Endothelial cell of umbilical vein (primary cell): ENCODE measurements at regions of chr19 and their contacts with region 1.

Region 1: DNA sequence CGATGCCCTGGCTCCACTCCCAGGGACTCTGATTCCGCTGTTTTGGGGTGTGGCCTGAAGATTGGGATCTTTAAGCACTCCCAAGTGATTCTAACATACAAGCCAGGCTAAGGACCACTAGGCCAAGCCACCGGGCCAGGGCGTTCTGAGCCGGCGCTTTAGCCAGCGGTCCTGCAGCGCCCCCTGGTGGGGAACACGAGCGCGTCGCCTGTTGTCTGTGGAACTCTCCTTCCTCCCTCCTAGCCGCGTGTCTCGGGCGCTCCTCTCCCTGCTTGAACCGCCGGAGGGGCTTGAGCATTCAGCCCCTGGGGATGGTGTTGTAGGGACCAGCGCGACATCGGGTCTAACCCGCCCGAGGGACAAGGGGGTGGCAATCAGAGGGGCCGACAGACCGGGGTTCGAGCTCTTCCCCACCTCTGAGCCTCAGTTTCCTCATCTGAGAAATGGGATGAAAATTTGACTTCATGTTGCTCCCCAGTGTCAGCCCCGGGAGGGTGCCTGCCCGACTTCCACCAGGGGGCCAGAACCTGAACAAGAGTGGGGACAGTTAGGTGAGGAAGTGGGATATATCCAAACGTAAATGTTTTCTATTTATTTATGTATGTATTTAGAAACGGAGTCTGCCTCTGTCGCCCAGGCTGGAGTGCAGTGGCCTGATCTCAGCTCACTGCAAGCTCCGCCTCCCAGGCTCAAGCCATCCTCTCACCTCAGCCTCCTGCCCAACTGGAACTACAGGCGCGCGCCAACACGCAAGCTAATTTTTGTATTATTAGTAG is 18.0 kb upstream of the PNMA8B start:
- DNase-seq: peak; percentile 55
- H3K4me3 ChIP-seq: no peak overlapping the region
- H3K27ac ChIP-seq: no peak overlapping the region
- H3K4me1 ChIP-seq: no peaks in the 10 kb centered on the region
- H3K27me3 ChIP-seq: no peaks in the 10 kb centered on the region
- CTCF ChIP-seq: peak; percentile 82 to 99
- POLR2A ChIP-seq: no peak

Region 2: DNA sequence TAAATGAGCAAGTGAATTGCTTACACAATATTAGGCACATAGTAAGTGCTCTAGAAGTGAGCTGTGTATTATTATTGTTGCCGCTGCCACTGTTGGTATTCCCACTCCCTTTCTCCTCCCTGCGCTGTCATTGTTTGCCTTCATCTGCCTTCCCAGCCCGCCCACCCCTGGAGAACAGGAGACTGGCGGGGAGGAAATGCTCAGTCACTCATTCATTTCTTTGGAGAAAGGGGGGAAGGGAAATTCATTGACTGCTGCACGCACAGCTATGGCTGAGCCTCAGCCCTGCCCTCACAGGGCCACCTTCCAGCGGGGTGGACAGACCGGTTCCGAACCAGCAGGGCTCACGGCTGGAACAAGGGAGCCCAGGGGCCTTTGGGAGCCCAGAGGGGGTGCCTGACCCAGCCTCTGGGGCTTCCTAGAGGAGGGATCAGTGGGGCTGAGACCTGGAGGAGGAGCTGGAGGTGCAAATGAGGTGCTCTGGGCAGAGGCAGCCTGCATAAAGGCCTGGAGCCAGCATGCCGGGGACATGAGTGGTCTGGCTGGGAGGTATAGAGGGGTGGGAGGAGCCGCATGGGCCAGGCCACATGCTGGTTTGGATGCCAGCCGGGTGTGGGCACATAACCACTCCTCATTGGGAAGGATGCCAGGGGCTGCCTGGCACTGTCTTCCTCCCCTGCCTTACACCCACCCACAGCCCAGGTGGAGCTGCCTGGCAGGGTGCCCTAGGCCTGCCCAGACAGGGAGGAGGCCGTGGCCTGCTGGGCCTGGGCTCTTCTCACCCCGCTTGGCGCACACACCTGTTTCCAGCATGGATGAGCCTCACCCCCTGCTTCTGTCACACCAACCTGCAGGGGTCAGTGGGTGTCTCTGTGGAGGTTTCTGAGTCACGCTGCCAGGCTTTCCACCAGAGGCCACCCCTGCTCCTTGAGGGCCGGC is 140.0 kb before region 1 on chr19:
- CTCF ChIA-PET with region 1: no interaction called
- POLR2A ChIA-PET with region 1: no interaction called
- dilution Hi-C with region 1: no loop called
- intact Hi-C with region 1: no loop called
- DNase-seq: peak; percentile 81
- H3K4me3 ChIP-seq: no peak overlapping the region
- H3K27ac ChIP-seq: peak overlapping the region; percentile 82
- H3K4me1 ChIP-seq: peaks cover 34% of the 10 kb centered on the region
- H3K27me3 ChIP-seq: no peaks in the 10 kb centered on the region
- CTCF ChIP-seq: no peak
- POLR2A ChIP-seq: no peak

Region 3: GRCh38 chr19:46392243-46392801 is 121.3 kb before region 1 on chr19:
- CTCF ChIA-PET with region 1: interaction called, 72 read pairs
- POLR2A ChIA-PET with region 1: no interaction called
- dilution Hi-C with region 1: no loop called
- intact Hi-C with region 1: loop called (anchors 1 kb)
- DNase-seq: no peak
- H3K4me3 ChIP-seq: no peak overlapping the region
- H3K27ac ChIP-seq: no peak overlapping the region
- H3K4me1 ChIP-seq: no peaks in the 10 kb centered on the region
- H3K27me3 ChIP-seq: no peaks in the 10 kb centered on the region
- CTCF ChIP-seq: no peak
- POLR2A ChIP-seq: no peak

Region 4: GRCh38 chr19:46404055-46404752 is 109.4 kb before region 1 on chr19:
- CTCF ChIA-PET with region 1: interaction called, 8 read pairs
- POLR2A ChIA-PET with region 1: no interaction called
- dilution Hi-C with region 1: no loop called
- intact Hi-C with region 1: loop called (anchors 1 kb)
- DNase-seq: no peak
- H3K4me3 ChIP-seq: no peak overlapping the region
- H3K27ac ChIP-seq: no peak overlapping the region
- H3K4me1 ChIP-seq: no peaks in the 10 kb centered on the region
- H3K27me3 ChIP-seq: peaks cover 30 to 31% of the 10 kb centered on the region in 2 experiments
- CTCF ChIP-seq: no peak
- POLR2A ChIP-seq: no peak

Region 5: DNA sequence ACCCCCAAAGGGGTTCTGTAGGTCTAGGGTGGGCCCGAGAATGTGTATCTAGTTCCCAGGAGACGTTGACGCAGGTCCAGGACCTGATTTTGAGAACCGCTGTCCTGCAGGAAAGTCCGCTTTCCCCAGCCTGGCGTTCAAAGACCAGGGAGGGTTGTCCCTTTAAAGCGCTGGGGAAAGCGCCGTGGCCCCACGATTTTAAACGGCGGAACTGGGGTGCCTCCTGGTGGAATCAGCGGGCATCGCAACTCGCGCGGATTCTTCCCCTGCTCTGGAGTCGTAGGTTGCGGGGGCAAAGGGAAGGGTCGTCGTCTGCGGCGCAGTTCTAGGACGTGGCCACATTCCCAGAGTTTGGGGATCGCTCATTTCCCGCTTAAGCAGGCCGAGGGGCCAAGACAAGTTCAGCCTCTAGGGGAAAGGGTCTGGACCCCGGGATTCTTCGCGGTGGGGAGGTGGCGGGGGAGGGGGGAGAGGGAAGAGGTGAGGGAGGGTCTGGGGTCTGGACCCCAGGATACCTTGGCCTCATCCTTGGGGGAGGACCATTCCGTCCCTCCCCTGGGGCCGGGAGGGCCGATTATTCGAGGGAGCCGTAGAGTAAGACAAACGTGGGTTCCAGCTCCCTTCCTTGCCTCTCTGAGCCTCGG is 25.7 kb before region 1 on chr19:
- CTCF ChIA-PET with region 1: interaction called, 6 read pairs
- POLR2A ChIA-PET with region 1: no interaction called
- dilution Hi-C with region 1: no loop called
- intact Hi-C with region 1: loop called (anchors 1 kb)
- DNase-seq: peak; percentile 58
- H3K4me3 ChIP-seq: no peak overlapping the region
- H3K27ac ChIP-seq: no peak overlapping the region
- H3K4me1 ChIP-seq: peaks cover 6% of the 10 kb centered on the region
- H3K27me3 ChIP-seq: peaks cover 49% of the 10 kb centered on the region in 2 experiments
- CTCF ChIP-seq: peak; percentile 85 to 88
- POLR2A ChIP-seq: no peak

Region 6: DNA sequence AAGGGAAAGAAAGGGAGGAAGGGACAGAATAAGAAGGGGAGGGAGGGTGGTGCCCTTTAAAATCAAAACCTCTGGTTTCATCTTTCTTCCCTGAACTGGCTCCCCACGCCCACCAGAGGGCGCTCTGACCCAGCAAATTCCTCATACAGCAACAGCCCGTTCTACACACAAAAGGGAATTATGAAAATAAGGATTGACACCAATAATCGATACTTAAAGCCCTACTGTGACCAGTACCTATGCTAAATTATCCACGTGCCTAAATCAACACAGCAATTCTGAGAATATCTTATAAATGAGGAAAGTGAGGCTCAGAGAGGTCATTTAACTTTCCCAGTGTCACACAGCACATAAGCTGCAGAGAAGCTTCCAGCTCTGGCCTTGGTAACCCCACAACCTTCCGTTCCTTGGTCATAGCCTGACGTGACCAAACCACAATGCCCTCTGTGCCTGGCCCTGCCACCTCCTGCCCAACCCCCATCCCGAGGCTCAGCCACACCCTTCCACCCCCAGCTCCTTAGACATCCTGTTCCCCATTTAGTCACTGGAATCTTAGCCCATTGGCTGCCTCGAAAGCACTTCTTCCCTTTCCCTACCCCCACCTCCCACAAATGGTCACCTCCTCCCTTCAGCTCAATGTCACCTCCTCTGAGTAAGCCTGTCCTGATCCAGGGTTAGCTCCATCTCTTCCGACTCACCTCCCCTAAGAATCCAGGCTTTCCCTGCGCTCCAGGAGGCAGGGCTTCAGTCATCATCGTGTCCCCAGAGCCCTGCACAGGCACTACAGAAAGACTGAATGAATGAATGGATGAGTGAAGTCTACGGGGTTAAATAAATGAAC is 16.2 kb after region 1 on chr19:
- CTCF ChIA-PET with region 1: interaction called, 20 read pairs
- POLR2A ChIA-PET with region 1: no interaction called
- dilution Hi-C with region 1: no loop called
- intact Hi-C with region 1: no loop called
- DNase-seq: peak; percentile 55
- H3K4me3 ChIP-seq: no peak overlapping the region
- H3K27ac ChIP-seq: no peak overlapping the region
- H3K4me1 ChIP-seq: no peaks in the 10 kb centered on the region
- H3K27me3 ChIP-seq: peaks cover 0 to 1% of the 10 kb centered on the region in 2 experiments
- CTCF ChIP-seq: peak; percentile 86 to 94
- POLR2A ChIP-seq: no peak

Region 7: DNA sequence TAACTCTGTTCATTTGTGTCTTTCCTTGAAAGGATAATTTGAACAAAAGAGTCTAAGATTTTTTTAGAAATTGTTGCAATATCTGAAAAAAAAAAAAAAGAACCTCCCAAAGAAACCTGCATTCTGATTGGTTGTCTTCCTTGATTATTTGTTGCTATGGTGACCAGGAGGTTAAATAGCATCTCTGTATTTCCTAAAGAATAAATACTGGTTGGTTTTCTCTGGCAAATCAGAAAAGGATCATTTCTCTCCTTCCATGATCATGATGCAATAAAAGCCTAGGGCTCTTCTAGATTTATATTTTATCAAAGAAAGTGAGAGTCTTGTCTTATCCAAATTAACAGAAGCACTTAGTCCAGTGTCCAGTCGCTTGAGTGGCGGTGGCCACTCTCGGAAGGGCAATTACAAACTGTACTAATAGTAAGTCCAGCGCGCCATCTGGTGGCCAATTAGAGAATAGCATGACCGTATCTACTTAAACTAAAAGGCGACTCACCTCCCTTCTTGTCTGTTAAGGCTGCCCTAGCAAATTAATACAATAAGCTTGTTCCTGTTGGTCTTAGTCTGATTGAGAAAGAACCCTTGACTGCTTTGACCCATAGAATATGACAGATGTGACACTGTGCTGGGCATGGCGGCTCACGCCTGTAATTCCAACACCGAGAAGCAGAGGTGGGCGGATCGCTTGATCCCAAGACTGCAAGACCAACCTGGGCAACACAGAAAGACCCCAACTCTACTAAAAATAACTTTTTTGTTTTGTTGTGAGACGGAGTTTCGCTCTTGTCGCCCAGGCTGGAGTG is 29.0 kb after region 1 on chr19:
- CTCF ChIA-PET with region 1: interaction called, 7 read pairs
- POLR2A ChIA-PET with region 1: no interaction called
- dilution Hi-C with region 1: no loop called
- intact Hi-C with region 1: loop called (anchors 1 kb)
- DNase-seq: peak; percentile 87
- H3K4me3 ChIP-seq: no peak overlapping the region
- H3K27ac ChIP-seq: no peak overlapping the region
- H3K4me1 ChIP-seq: no peaks in the 10 kb centered on the region
- H3K27me3 ChIP-seq: no peaks in the 10 kb centered on the region
- CTCF ChIP-seq: peak; percentile 72 to 74
- POLR2A ChIP-seq: no peak

Region 8: GRCh38 chr19:46661020-46661731 is 147.5 kb after region 1 on chr19 and contains the start of gene DACT3:
- CTCF ChIA-PET with region 1: no interaction called
- POLR2A ChIA-PET with region 1: no interaction called
- dilution Hi-C with region 1: no loop called
- intact Hi-C with region 1: no loop called
- DNase-seq: peak; percentile 100
- H3K4me3 ChIP-seq: peak within 1 kb of the TSS; percentile 29 to 57 (median 33)
- H3K27ac ChIP-seq: peak within 1 kb of the TSS; percentile 34
- H3K4me1 ChIP-seq: peaks cover 14% of the 10 kb centered on the region
- H3K27me3 ChIP-seq: peaks cover 13 to 22% of the 10 kb centered on the region in 2 experiments
- CTCF ChIP-seq: no peak
- POLR2A ChIP-seq: no peak
- total RNA-seq, gene DACT3: 0.22 and 0.65 TPM in 2 replicates